Posterior cingulate gyrus (tissue), 11 donors: ENCODE measurements at regions of chr4 and their contacts with region 1.

Region 1: GRCh38 chr4:26410385-26411293 is 79.6 kb downstream of the CCKAR start:
- DNase-seq: peak in 1 of 10 donors; percentile 18

Region 2: GRCh38 chr4:25986807-25987206 is 423.8 kb before region 1 on chr4:
- intact Hi-C with region 1: loop called (anchors 5 kb)
- DNase-seq: peak in 2 of 10 donors; percentile 35 to 84

Region 3: DNA sequence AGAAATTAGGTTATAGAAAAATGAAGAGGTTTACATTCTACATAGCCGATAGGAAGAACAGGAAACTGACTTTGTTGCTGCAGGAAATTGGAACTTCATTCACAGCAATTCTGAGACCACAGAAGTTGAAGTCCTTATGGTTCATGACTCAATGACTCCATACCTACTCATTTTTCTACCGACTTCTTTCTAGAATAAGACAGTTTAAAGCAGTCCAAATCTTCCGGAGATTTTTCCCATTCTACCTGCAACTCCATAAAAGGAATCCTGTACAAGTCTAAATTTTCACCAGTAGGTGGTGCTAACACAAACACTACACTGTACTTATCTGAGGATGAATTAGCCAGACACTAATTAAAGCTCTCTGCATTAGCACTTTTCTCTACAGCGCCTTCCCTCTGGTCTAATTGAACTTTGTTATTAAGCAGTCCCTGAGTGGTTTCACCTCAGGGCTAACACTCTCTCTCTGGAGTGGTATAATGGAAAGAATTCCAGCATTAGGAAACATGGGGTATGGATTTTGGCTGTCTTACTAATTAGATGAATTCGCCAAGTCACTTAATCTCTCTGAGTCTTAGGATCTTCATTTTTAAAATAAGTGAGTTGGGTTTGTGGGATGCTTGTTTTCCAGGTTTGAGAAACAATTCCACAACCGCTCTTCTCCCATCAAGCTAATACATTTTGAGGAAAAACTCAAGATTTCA is 328.7 kb before region 1 on chr4:
- intact Hi-C with region 1: loop called (anchors 10 kb)
- DNase-seq: no peak

Region 4: DNA sequence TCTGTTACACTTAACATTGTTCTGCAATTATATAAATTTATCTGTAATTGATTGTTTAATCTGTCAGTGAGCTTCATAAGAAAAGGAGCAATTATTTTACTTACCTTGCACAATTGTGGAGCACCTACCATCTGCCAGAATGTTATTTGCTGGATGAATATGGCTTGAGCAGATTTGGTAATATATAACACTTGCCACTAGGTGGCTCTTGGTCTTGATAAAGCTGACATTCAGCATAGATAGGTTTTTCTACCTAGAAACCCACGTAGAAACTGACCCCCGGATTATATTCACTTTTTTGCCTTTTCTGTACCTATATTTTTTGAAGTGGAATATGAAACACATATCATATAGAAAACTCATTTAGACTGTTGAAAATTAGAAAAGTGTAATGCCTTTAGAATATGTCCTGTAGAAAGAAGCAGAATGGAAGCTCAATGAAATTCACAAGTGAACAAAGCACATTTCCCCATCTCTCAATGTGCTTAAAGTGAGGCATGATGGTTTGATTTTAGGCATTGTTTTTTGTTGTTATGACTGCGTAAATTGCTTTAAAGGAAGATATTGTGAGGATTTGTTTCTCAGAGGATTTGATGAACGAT is 80.4 kb before region 1 on chr4:
- intact Hi-C with region 1: loop called (anchors 1 kb)
- DNase-seq: no peak

Region 5: GRCh38 chr4:27357283-27357682 is 946.6 kb after region 1 on chr4:
- intact Hi-C with region 1: no loop called
- DNase-seq: no peak